ENCODE measurements at regions of chr3 and their contacts with region 1.

Region 1: GRCh38 chr3:42205800-42206514 is 60.0 kb downstream of the CCK start:
- DNase-seq: no peak
- H3K4me3 ChIP-seq: no peak overlapping the region
- H3K27ac ChIP-seq: no peak overlapping the region
- H3K4me1 ChIP-seq: peaks cover 0 to 6% (median 0%) of the 10 kb centered on the region in 4 experiments; a peak in 1 of 7 replicates
- H3K27me3 ChIP-seq: no peaks in the 10 kb centered on the region
- CTCF ChIP-seq: no peak
- EP300 ChIP-seq: no peak
- POLR2A ChIP-seq: no peak
- RAD21 ChIP-seq: no peak

Region 2: GRCh38 chr3:42229942-42230688 is 24.2 kb after region 1 on chr3:
- CTCF ChIA-PET with region 1: interaction called, 10 read pairs
- POLR2A ChIA-PET with region 1: no interaction called
- DNase-seq: no peak
- H3K4me3 ChIP-seq: no peak overlapping the region
- H3K27ac ChIP-seq: no peak overlapping the region
- H3K4me1 ChIP-seq: 0 out of 7 replicates have a peak, but pooled peaks cover 0 to 4% (median 0%) of the 10 kb centered on the region in 4 experiments
- H3K27me3 ChIP-seq: no peaks in the 10 kb centered on the region; a peak in 1 of 7 replicates
- CTCF ChIP-seq: peak in 2 of 3 experiments; percentile 61 to 67; a peak in 3 of 4 replicates
- EP300 ChIP-seq: no peak
- POLR2A ChIP-seq: no peak
- RAD21 ChIP-seq: peak; percentile 86 to 88

Measured in H1 (cell line).